HCT116 (cell line): ENCODE measurements at regions of chr1 and their contacts with region 1.

Region 1: DNA sequence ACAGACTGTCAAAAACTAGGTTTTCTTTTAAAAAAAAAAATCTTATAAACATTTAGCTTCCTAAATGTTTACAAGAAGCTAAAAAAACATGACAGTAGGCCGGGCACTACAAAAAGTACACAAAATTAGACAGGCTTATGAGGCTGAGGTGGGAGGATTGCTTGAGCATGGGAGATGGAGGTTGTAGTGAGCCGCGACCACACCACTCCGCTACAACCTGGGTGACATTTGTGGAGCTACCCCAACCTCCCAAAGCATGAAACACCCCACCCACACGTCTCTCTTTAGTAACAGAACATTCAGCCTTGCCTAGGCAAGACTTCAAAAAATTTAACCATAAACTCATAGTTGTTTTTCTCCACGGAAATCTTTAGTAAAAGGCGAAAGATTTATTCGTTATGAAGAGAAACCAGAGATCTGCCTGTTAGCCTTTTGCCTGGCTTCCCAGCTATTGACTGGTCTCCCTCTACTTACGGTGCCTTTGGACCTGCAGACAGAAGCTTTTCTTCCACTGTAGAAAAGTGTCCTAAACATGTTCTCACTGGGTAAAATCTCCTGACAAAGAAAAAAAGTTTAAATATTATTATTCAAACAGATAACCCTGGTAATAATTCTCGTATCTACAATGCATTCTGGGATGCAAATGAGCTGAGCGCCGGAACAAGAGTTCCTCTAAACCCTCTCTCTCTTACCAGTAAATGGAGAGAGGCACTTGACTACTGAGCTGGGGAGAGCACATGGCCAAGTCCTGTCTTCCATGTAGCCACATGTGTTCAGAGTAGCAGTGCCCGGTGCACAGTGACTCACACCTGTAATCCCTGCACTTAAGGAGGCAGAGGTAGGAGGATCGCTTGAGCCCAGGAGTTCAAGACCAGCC is 9.2 kb downstream of the RNU5D-1 start:
- DNase-seq: peak; percentile 99
- ATAC-seq: peak; percentile 91
- H3K4me3 ChIP-seq: no peak overlapping the region
- H3K27ac ChIP-seq: peak overlapping the region; percentile 75
- H3K4me1 ChIP-seq: peaks cover 10 to 33% of the 10 kb centered on the region in 2 experiments
- H3K27me3 ChIP-seq: no peaks in the 10 kb centered on the region
- CTCF ChIP-seq: no peak
- POLR2A ChIP-seq: peak; percentile 100
- RAD21 ChIP-seq: no peak

Region 2: DNA sequence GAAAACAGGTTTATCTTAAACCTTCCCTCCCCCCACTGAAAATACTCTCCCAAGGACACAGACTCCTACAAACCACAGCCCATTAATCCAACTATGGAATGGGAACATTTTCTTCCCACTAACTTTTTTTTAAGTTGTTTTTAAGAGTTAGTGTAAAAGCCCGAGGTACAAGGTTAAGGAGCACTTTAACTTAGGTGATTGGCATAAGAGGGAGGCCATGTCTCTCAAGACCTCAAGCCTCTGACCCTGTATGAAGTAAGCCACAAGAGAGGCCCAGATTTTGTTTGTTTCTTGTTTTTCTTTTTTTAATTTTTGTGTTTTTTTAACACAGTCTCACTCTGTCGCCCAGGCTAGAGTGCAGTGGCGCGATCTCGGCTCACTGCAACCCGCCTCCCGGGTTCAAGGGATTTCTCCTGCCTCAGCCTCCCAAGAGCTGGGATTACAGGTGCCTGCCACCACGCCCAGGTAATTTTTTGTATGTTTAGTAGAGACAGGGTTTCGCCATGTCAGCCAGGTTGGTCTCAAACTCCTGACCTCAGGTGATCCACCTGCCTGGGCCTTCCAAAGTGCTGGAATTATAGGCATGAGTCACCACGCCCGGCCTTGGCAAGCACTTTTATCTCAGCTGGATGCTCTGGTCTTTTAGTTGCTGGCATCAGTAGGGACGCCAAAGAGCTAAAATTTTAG is 32.8 kb before region 1 on chr1:
- CTCF ChIA-PET with region 1: no interaction called
- POLR2A ChIA-PET with region 1: interaction called, 39 read pairs
- RAD21 ChIA-PET with region 1: no interaction called
- intact Hi-C with region 1: no loop called
- DNase-seq: no peak
- ATAC-seq: peak; percentile 75
- H3K4me3 ChIP-seq: peak overlapping the region in 1 of 2 experiments; percentile 10; a peak in 1 of 4 replicates
- H3K27ac ChIP-seq: no peak overlapping the region
- H3K4me1 ChIP-seq: peaks cover 31 to 46% of the 10 kb centered on the region in 2 experiments
- H3K27me3 ChIP-seq: no peaks in the 10 kb centered on the region
- CTCF ChIP-seq: no peak
- POLR2A ChIP-seq: no peak
- RAD21 ChIP-seq: no peak

Region 3: DNA sequence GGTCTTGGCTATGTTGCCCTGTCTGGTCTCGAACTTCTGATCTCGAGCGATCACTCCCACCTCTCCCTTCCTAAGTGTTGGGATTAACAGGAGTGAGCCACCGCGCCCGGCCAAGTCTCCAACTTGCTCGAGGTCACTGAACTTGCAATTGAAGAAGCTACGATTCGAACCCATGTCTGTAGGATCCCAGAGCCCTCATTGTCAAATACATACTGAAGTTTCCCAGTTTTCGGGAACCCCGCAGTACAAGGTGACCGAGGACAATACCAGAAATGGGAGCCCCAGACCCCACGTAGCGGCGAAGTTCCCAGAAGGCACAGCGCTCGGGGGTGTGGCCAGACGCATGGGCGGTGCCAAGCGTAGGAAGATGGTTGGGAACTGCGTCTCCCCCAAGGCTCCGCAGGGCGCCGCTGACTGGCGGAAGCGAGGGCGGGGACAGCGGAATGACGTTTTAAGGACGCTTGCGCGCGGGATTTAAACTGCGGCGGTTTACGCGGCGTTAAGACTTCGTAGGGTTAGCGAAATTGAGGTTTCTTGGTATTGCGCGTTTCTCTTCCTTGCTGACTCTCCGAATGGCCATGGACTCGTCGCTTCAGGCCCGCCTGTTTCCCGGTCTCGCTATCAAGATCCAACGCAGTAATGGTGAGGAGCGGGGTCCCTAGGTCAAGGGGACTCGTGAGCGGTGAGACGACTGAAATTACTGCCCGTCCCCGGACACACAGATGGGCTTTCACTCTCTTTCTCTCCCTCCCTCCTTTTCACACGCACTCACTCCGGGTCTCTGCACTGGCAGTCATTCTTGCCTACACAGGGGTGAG is 17.8 kb after region 1 on chr1 and contains the start of gene KIF2C:
- CTCF ChIA-PET with region 1: no interaction called
- POLR2A ChIA-PET with region 1: interaction called, 461 read pairs
- RAD21 ChIA-PET with region 1: no interaction called
- intact Hi-C with region 1: no loop called
- DNase-seq: peak; percentile 96
- ATAC-seq: peak; percentile 98
- H3K4me3 ChIP-seq: peak within 1 kb of the TSS; percentile 75 to 95
- H3K27ac ChIP-seq: peak within 1 kb of the TSS; percentile 65
- H3K4me1 ChIP-seq: peaks cover 5 to 23% of the 10 kb centered on the region in 2 experiments; a peak in 3 of 4 replicates
- H3K27me3 ChIP-seq: no peaks in the 10 kb centered on the region
- CTCF ChIP-seq: no peak
- POLR2A ChIP-seq: peak; percentile 98
- RAD21 ChIP-seq: no peak
- total RNA-seq, gene KIF2C: 92.6 TPM

Region 4: GRCh38 chr1:44799770-44800584 is 78.3 kb after region 1 on chr1 and contains the start of gene PLK3:
- CTCF ChIA-PET with region 1: no interaction called
- POLR2A ChIA-PET with region 1: interaction called, 47 read pairs
- RAD21 ChIA-PET with region 1: no interaction called
- intact Hi-C with region 1: no loop called
- DNase-seq: peak; percentile 96
- ATAC-seq: peak; percentile 86
- H3K4me3 ChIP-seq: peak within 1 kb of the TSS; percentile 87 to 91
- H3K27ac ChIP-seq: peak within 1 kb of the TSS; percentile 84
- H3K4me1 ChIP-seq: peaks cover 19 to 71% of the 10 kb centered on the region in 2 experiments
- H3K27me3 ChIP-seq: no peaks in the 10 kb centered on the region
- CTCF ChIP-seq: peak in 2 of 3 experiments; percentile 81 to 91; a peak in 4 of 6 replicates
- POLR2A ChIP-seq: peak; percentile 97
- RAD21 ChIP-seq: no peak
- total RNA-seq, gene PLK3: 56.1 TPM

Region 5: GRCh38 chr1:45011837-45012638 is 290.3 kb after region 1 on chr1 and contains the start of gene UROD:
- CTCF ChIA-PET with region 1: no interaction called
- POLR2A ChIA-PET with region 1: interaction called, 20 read pairs
- RAD21 ChIA-PET with region 1: no interaction called
- intact Hi-C with region 1: no loop called
- DNase-seq: peak; percentile 93
- ATAC-seq: peak; percentile 72
- H3K4me3 ChIP-seq: peak within 1 kb of the TSS; percentile 74 to 75
- H3K27ac ChIP-seq: peak within 1 kb of the TSS; percentile 65
- H3K4me1 ChIP-seq: peaks cover 9 to 28% of the 10 kb centered on the region in 2 experiments; a peak in 3 of 4 replicates
- H3K27me3 ChIP-seq: no peaks in the 10 kb centered on the region
- CTCF ChIP-seq: no peak
- POLR2A ChIP-seq: peak; percentile 85
- RAD21 ChIP-seq: peak; percentile 2; the same call in 1 of the 2 replicates
- total RNA-seq, gene UROD: 73.7 TPM

Region 6: DNA sequence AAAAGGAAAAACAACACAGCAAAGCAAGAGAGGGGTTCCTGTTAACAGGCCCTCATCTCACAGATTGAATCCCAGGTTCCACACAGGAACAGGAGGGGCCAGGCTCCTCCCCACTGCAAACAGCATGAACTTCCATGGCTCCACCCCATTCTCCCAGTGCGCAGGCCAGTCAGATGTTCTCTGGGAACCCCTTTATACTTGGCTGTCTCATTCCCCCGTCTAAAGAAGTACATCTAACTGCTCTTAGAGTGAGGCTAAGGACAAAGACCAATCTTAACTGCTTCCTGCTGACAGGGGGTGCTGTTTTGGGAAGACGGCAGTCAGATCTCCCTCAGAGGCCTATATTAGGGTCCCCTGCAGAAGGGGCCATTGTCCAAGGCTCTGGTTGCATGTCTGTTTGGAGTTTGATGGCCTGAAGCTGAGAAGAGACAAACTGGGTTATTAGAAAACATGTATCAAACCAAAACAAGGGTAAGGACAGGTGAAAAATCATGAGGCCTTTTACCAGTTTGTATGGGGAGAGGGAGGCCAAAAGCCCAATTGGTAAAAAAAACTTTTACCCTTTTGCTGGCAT is 851.6 kb after region 1 on chr1:
- CTCF ChIA-PET with region 1: no interaction called
- POLR2A ChIA-PET with region 1: no interaction called
- RAD21 ChIA-PET with region 1: no interaction called
- intact Hi-C with region 1: no loop called
- DNase-seq: no peak
- ATAC-seq: no peak
- H3K4me3 ChIP-seq: no peak overlapping the region
- H3K27ac ChIP-seq: no peak overlapping the region
- H3K4me1 ChIP-seq: no peaks in the 10 kb centered on the region
- H3K27me3 ChIP-seq: no peaks in the 10 kb centered on the region
- CTCF ChIP-seq: no peak
- POLR2A ChIP-seq: no peak
- RAD21 ChIP-seq: no peak